Tibial artery (tissue), 4 donors: ENCODE measurements at regions of chr18 and their contacts with region 1.

Region 1: GRCh38 chr18:62576845-62577512 is 54.2 kb downstream of the ZCCHC2 start:
- DNase-seq: no peak
- H3K4me3 ChIP-seq: no peak overlapping the region
- H3K27ac ChIP-seq: no peak overlapping the region
- H3K4me1 ChIP-seq: peaks cover 0 to 6% (median 2%) of the 10 kb centered on the region in 4 donors
- H3K27me3 ChIP-seq: no peaks in the 10 kb centered on the region
- CTCF ChIP-seq: no peak

Region 2: DNA sequence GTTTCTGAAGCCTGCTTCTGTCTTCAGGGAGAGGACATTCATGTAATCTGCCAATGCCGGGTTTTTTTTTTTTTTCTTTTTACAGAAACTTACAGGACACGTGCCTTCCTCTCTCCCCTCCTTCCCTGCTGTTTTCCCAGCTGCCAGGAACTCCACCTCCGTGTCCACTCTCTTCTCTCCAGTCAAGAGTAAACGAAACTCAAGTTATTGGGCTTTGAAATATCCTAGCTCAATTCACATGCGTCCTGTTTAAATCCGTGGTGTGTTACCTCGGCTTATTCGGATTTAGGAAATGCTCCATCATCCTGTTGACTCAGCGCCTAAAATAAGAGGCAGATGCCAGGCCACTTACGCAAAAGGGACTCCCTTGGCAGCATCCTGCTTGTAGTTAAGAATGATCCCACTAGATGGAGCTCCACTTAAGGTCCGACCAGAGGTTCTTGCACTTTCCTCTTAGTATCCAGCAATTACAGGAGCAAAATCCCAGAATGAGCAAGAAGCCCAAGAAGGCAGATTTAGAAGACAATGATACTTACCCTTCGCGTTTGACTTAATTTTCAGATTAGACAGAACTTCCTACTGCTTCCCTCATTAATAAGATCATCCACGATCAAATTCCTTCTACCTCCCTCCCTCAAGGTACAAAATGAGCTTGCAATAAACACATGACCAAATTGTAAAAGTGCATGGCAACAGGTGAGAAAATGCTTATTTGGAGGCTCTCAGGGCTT is 151.3 kb before region 1 on chr18:
- intact Hi-C with region 1: loop called (anchors 5 kb)
- DNase-seq: peak; percentile 89 to 92
- H3K4me3 ChIP-seq: peak overlapping the region; percentile 27 to 49
- H3K27ac ChIP-seq: peak overlapping the region; percentile 75 to 83
- H3K4me1 ChIP-seq: peaks cover 0 to 21% (median 5%) of the 10 kb centered on the region in 4 donors
- H3K27me3 ChIP-seq: no peaks in the 10 kb centered on the region
- CTCF ChIP-seq: peak; percentile 84 to 92

Region 3: GRCh38 chr18:62725896-62726295 is 148.9 kb after region 1 on chr18:
- intact Hi-C with region 1: no loop called
- DNase-seq: no peak
- H3K4me3 ChIP-seq: no peak overlapping the region
- H3K27ac ChIP-seq: no peak overlapping the region
- H3K4me1 ChIP-seq: peaks cover 0 to 46% (median 9%) of the 10 kb centered on the region in 4 donors
- H3K27me3 ChIP-seq: no peaks in the 10 kb centered on the region
- CTCF ChIP-seq: no peak